A549 (cell line): ENCODE measurements at regions of chr1 and their contacts with region 1.

Region 1: GRCh38 chr1:201559679-201560162 is 20.8 kb downstream of the NAV1 start:
- DNase-seq: peak; percentile 85 to 92
- ATAC-seq: peak; percentile 88 to 96
- H3K4me3 ChIP-seq: no peak overlapping the region
- H3K27ac ChIP-seq: peak overlapping the region; percentile 60 to 80
- H3K4me1 ChIP-seq: peaks cover 37% of the 10 kb centered on the region
- CTCF ChIP-seq: peak; percentile 95
- EP300 ChIP-seq: no peak
- POLR2A ChIP-seq: no peak
- RAD21 ChIP-seq: peak; percentile 99 to 100

Region 2: DNA sequence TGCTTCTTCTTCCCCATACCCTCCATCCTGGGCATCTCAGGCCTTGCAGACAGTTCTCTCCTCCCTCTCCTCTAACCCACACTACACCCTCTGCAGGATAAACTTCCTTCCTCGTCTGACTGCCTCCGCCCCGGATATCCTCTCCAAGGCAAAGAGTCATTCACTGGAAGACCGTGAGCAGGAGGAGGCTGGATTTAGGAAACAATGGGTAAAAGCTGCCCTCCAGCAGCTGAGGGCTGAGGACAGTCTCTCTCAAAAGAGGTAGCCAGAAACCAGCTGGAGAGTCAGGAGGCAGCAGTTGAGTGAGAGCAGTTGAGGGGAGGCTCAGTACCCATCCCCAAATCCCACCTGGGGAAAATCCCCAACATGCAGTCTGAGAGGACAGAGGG is 54.2 kb before region 1 on chr1:
- CTCF ChIA-PET with region 1: no interaction called
- POLR2A ChIA-PET with region 1: no interaction called
- DNase-seq: peak in 1 of 2 experiments; percentile 60
- ATAC-seq: peak; percentile 9 to 33; a peak in 3 of 6 replicates
- H3K4me3 ChIP-seq: peak overlapping the region; percentile 66
- H3K27ac ChIP-seq: peak overlapping the region; percentile 87 to 96
- H3K4me1 ChIP-seq: peaks cover 62% of the 10 kb centered on the region
- CTCF ChIP-seq: no peak
- EP300 ChIP-seq: no peak
- POLR2A ChIP-seq: no peak
- RAD21 ChIP-seq: no peak

Region 3: GRCh38 chr1:201545851-201546492 is 13.7 kb before region 1 on chr1:
- CTCF ChIA-PET with region 1: interaction called, 36 read pairs
- POLR2A ChIA-PET with region 1: no interaction called
- DNase-seq: peak; percentile 47 to 55
- ATAC-seq: peak; percentile 96 to 98
- H3K4me3 ChIP-seq: no peak overlapping the region
- H3K27ac ChIP-seq: peak overlapping the region in 1 of 2 experiments; percentile 70; a peak in 3 of 6 replicates
- H3K4me1 ChIP-seq: peaks cover 6% of the 10 kb centered on the region; the same call in 1 of the 3 replicates
- CTCF ChIP-seq: no peak; the same call in none of the 3 replicates
- EP300 ChIP-seq: no peak
- POLR2A ChIP-seq: no peak
- RAD21 ChIP-seq: no peak

Region 4: DNA sequence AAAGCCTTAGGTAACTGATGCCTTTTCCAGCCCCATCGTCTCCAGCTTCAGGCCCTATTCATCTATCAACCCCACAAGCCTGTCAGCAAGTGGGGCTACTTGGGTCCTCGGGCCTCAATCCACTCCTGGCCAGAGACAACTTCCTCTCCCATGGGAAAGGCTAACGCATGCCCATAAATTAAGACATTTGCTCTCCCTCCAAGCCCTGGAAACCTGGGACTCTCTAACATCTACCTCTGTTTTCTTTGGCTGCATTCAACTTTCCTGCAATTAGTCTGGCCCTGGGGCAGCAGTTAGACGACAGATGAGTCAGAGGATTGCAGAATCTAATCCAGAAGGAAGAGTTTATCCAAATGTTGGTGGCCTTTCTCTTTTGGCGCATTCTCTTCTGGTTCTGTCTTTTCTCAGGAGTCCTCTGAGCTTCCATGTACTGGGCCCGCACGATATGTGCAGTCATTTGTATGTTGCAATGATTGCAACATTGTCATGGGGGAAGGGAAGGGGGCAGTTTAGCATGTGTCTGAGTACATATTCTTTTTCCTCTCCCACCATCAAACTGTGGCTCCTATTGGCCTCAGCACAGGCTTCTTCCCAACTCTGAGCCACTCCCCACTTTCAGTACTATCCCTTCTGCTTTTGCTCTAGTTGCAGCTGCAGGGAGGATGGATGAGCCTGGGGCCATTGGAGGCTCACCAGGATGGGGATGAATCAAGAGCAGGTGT is 33.6 kb after region 1 on chr1:
- CTCF ChIA-PET with region 1: interaction called, 83 read pairs
- POLR2A ChIA-PET with region 1: no interaction called
- DNase-seq: peak; percentile 28 to 75
- ATAC-seq: peak; percentile 66
- H3K4me3 ChIP-seq: no peak overlapping the region
- H3K27ac ChIP-seq: peak overlapping the region; percentile 81 to 90
- H3K4me1 ChIP-seq: peaks cover 62% of the 10 kb centered on the region
- CTCF ChIP-seq: no peak
- EP300 ChIP-seq: peak; percentile 94 to 95; a peak in 4 of 5 replicates
- POLR2A ChIP-seq: no peak
- RAD21 ChIP-seq: peak in 1 of 2 experiments; percentile 43; a peak in 2 of 5 replicates

Region 5: DNA sequence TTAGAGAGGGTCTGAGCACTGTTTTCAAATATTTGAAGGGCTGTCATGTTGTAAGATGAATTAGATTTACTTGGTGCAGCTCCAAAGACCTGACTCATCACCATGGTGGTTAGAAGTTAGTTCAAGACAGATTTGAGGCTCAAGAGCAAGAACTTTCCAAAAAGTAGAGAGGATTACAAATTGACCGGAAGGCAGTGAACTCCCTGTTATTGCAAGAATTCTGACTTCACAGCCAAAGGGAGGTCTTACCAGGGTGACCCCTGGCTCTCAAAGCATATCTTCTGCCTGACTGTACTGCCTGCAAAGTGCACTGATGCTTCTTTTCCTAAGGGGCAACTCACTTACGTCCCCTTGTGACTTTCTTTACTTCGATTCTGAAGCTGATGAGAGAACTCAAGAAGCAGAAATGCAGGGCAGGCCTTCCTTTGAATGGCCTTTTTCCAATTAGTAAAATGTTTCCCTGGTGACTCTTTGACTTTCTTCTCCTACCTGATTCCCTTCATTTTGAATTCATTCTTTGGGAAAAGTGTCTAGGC is 65.6 kb after region 1 on chr1:
- CTCF ChIA-PET with region 1: interaction called, 41 read pairs
- POLR2A ChIA-PET with region 1: no interaction called
- DNase-seq: peak in 1 of 2 experiments; percentile 58
- ATAC-seq: peak; percentile 64 to 77; a peak in 5 of 6 replicates
- H3K4me3 ChIP-seq: no peak overlapping the region
- H3K27ac ChIP-seq: peak overlapping the region; percentile 72 to 79
- H3K4me1 ChIP-seq: peaks cover 37% of the 10 kb centered on the region
- CTCF ChIP-seq: no peak
- EP300 ChIP-seq: peak; percentile 50 to 85; a peak in 2 of 5 replicates
- POLR2A ChIP-seq: no peak
- RAD21 ChIP-seq: peak in 1 of 2 experiments; percentile 32; a peak in 1 of 5 replicates

Region 6: DNA sequence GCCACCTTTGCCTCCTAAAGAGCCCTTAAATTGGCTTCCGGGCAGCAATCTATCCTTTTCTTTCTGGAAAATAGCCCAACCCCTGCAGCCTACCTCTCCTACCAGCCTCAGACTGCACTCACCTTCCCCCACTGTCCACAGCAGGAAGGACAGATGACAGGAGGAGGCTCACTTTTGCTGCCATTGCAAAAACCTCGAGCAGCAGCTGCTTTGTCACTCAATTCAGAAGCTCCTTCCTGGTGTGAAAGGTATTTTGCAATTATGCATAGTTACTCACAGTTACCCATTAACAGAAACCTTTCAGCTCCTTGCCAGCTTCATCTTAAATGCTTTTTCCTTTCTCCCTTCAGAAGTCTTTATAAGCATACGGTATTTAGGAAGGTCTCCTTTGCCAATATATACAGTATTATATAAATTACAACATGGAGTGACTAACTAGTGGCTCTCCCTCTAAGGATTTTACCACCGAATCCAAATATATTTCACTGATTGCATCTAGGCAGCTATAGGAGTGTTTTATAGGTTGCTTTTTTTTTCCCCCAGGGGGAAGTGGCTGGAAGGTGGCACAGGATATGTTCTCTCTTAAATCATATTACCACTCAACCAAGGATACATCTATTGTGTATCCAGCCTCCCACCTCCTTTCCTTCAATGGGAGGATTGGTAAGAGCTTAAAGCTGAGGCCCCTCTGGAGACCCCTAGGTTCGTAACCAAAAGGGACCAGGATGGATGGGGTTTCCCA is 127.2 kb after region 1 on chr1:
- CTCF ChIA-PET with region 1: interaction called, 22 read pairs
- POLR2A ChIA-PET with region 1: no interaction called
- DNase-seq: peak; percentile 22 to 33
- ATAC-seq: peak; percentile 30 to 56; a peak in 3 of 6 replicates
- H3K4me3 ChIP-seq: no peak overlapping the region
- H3K27ac ChIP-seq: peak overlapping the region in 1 of 2 experiments; percentile 48; a peak in 3 of 6 replicates
- H3K4me1 ChIP-seq: peaks cover 15% of the 10 kb centered on the region
- CTCF ChIP-seq: no peak
- EP300 ChIP-seq: no peak
- POLR2A ChIP-seq: no peak
- RAD21 ChIP-seq: no peak

Region 7: DNA sequence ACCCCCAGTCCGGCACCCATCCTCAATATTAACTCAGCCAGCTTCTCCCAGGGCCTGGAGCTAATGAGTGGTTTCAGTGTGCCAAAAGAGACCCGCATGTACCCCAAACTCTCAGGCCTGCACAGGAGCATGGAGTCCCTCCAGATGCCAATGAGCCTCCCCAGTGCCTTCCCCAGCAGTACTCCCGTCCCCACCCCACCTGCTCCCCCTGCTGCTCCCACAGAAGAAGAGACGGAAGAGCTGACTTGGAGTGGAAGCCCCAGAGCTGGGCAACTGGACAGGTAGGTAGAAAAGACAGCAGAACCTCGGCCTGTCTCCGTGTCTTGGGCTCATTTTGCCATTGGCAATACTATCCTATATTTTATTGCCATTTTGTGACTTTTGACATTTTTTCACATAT is 223.9 kb after region 1 on chr1:
- CTCF ChIA-PET with region 1: interaction called, 227 read pairs
- POLR2A ChIA-PET with region 1: no interaction called
- DNase-seq: no peak
- ATAC-seq: peak in 1 of 2 experiments; percentile 55; a peak in 1 of 6 replicates
- H3K4me3 ChIP-seq: no peak overlapping the region
- H3K27ac ChIP-seq: no peak overlapping the region
- H3K4me1 ChIP-seq: peaks cover 7% of the 10 kb centered on the region; the same call in 2 of the 3 replicates
- CTCF ChIP-seq: no peak
- EP300 ChIP-seq: no peak
- POLR2A ChIP-seq: no peak
- RAD21 ChIP-seq: peak in 1 of 2 experiments; percentile 33; a peak in 1 of 5 replicates

Region 8: DNA sequence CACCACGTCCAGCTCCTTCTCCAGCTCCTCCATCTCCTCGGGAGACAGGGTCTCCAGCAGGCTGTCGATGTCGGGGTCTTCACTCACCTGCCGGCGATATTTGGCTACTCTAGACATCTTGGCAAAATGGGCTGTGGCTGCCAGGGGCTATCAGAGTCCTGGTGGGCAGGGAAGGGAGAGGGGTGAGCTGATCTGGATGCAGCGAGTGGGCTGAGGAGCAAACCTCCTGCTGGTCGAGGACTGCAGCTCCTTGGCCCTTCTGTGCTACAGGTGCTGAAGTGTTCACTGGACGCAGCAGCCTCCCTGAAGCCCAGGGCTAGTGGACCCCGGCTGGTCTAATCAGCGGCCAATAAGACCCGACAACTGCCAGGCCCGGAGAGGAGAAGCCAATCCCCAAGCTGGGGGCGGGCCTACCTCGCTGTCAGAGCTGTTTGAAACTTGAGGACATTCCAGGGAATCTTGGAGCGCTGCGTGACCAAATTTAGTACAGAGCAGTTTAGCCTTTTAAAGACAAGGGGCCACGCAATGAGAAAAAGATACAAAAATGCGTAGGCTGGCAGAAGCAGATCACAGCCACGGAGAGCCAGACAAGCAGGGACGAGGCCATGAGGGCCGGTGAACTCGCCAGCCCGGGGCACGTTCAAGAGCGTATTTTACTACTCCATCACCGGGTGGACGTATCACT is 386.6 kb after region 1 on chr1 and contains the start of gene LMOD1:
- CTCF ChIA-PET with region 1: no interaction called
- POLR2A ChIA-PET with region 1: no interaction called
- DNase-seq: no peak
- ATAC-seq: peak in 1 of 2 experiments; percentile 69; a peak in 3 of 6 replicates
- H3K4me3 ChIP-seq: no peak within 1 kb of the TSS
- H3K27ac ChIP-seq: no peak within 1 kb of the TSS
- H3K4me1 ChIP-seq: no peaks in the 10 kb centered on the region
- CTCF ChIP-seq: no peak
- EP300 ChIP-seq: no peak
- POLR2A ChIP-seq: no peak
- RAD21 ChIP-seq: no peak
- polyA plus RNA-seq, gene LMOD1: 0.03 TPM in 1 of 2 replicates, not detected in the other